ENCODE measurements at regions of chr2 and their contacts with region 1.

Region 1: DNA sequence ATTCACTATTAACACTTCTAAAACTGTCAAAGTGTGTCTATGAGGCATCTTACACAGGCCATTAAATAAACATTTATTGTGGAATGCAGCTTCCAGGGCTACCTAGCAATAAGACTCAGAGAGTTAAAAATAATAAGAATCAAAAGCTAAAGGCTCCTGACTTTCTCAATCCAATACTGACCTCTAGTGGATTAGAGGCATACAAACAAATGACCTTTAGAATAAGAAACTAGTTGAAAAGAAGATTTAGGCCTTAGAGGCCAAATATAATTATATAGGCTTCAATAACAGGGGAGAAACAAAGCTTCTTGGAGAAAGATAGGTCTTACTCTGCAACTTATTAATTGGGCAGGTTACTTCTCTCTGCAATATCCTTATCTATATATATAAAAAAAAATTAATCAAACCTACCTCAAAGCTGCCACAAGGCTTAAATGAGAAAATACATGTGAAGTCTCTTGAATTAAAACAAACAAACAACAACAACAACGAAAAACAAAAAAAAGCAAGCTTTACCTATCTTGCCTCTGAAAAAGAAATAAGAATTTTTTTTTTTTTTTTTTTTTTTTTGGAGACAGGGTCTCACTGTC is 246.1 kb downstream of the EXOC6B start:
- DNase-seq: peak in 3 of 4 experiments; percentile 7 to 62 (median 17)
- ATAC-seq: peak; percentile 77
- H3K4me3 ChIP-seq: no peak overlapping the region
- H3K27ac ChIP-seq: no peak overlapping the region
- H3K4me1 ChIP-seq: no peaks in the 10 kb centered on the region
- H3K27me3 ChIP-seq: no peaks in the 10 kb centered on the region
- CTCF ChIP-seq: peak; percentile 49 to 81 (median 54); a peak in 4 of 6 replicates
- EP300 ChIP-seq: no peak
- POLR2A ChIP-seq: no peak
- RAD21 ChIP-seq: peak; percentile 91 to 94

Region 2: DNA sequence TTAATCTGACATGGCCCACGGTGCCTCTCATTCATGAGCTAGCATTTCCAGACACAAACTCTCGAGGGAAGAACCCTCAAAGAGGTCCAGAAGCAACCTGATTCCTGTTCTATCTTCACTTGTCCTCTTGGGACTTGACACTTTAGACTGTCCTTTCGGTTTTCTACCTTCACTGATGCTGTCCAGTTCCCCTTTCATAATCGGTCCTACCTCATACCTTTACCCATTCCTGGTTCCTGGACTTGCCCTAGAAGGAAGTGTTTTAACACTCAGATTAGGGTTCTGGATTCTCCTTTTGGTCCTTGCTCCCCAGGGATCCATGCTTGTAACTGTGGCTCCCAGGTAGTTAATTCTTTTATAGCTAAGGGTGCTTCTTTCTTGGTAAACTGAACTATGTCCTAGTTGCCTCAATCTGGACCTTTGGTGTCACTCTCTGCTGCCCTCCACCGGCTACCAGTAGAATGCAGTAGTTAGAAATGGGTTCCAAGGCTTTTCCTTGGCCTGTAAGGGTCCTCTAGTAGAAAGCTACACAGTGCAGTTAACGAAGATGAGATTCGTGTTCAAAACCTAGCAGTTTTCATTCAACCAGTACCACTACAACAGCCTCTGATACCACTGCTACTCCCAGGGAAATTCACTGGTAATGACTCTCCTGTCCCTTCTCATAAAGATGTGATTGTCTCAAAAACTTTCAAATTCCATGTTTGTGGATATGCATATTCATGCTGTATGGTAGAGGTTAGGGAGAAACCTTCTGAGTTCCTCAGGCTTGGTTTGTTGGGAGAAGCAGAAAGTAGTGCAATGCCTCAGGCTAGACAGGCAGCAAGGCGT is 253.9 kb before region 1 on chr2:
- CTCF ChIA-PET with region 1: no interaction called
- POLR2A ChIA-PET with region 1: no interaction called
- in situ Hi-C with region 1: no loop called
- intact Hi-C with region 1: loop called (anchors 5 kb)
- DNase-seq: peak; percentile 24 to 51 (median 30)
- ATAC-seq: peak; percentile 85
- H3K4me3 ChIP-seq: no peak overlapping the region
- H3K27ac ChIP-seq: no peak overlapping the region
- H3K4me1 ChIP-seq: no peaks in the 10 kb centered on the region
- H3K27me3 ChIP-seq: no peaks in the 10 kb centered on the region
- CTCF ChIP-seq: peak; percentile 55 to 71 (median 67)
- EP300 ChIP-seq: no peak
- POLR2A ChIP-seq: no peak
- RAD21 ChIP-seq: peak; percentile 22 to 53

Region 3: DNA sequence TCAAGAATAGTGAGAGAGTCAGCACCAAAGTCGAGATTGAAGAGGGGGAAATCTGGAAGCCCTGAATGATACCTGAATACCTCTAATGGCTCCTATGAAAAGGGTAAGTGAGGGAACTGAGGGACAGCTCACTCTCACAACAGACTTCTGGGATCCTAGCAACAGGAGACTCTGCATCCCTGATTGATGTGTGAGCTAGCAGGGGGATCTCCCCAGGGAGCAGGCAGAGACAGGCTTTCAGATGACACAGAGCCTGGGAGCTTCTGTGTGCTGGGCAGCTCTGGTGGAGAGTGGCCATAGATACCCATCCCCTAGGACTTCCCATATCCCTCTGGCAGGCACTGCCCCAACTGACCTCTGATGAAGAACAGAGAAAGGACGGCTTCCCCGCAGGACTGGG is 39.9 kb after region 1 on chr2:
- CTCF ChIA-PET with region 1: no interaction called
- POLR2A ChIA-PET with region 1: no interaction called
- in situ Hi-C with region 1: no loop called
- intact Hi-C with region 1: no loop called
- DNase-seq: no peak
- ATAC-seq: no peak
- H3K4me3 ChIP-seq: no peak overlapping the region
- H3K27ac ChIP-seq: no peak overlapping the region
- H3K4me1 ChIP-seq: no peaks in the 10 kb centered on the region
- H3K27me3 ChIP-seq: peaks cover 0 to 5% of the 10 kb centered on the region in 2 experiments; a peak in 2 of 5 replicates
- CTCF ChIP-seq: no peak
- EP300 ChIP-seq: no peak
- POLR2A ChIP-seq: no peak
- RAD21 ChIP-seq: no peak

Measured in K562 (cell line).